ENCODE measurements at regions of chr12 and their contacts with region 1.

Region 1: DNA sequence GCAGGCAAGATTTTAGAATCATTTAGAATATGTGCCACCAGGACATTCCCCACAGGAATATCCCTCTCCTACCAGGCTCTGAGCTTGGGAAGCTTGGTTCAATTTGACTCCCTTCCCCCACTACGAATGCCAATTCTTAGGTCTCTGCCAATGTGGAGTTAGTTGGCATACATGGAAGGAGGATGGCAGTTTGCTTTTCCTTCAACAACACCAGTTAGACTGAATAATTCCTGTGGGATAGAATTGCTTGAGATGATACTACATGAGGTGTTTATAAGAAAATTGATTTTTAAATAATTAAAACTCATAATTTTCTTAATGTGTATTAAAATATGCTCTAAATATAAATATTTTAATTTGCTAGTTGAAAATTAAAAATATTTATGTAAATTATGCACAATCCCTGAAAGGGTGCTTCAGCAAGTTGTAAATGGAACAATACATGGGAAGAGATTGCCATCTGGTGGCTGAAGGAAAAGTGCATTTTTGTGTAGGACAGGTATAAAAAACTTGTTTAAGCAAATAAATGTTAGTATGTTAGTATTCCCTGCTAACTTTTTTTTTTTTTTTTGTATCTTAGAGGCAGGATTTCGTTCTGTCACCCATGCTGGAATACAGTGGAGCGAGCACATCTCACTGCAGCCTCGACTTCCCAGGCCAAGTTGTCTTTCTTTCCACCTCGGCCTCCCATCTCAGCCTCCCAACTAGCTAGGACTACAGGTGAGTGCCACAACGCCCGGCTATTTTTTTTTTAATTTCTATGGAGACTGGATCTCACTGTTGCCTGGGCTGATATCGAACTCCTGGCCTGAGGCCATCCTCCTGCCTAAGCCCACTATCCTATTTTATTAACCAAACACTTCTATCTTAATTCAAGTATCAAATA is 25.8 kb upstream of the STRAP start:
- DNase-seq: no peak
- ATAC-seq: peak; percentile 84
- H3K4me3 ChIP-seq: no peak overlapping the region
- H3K27ac ChIP-seq: peak overlapping the region in 1 of 2 donors; percentile 36
- H3K4me1 ChIP-seq: peaks cover 0 to 2% of the 10 kb centered on the region in 2 donors
- H3K27me3 ChIP-seq: no peaks in the 10 kb centered on the region

Region 2: DNA sequence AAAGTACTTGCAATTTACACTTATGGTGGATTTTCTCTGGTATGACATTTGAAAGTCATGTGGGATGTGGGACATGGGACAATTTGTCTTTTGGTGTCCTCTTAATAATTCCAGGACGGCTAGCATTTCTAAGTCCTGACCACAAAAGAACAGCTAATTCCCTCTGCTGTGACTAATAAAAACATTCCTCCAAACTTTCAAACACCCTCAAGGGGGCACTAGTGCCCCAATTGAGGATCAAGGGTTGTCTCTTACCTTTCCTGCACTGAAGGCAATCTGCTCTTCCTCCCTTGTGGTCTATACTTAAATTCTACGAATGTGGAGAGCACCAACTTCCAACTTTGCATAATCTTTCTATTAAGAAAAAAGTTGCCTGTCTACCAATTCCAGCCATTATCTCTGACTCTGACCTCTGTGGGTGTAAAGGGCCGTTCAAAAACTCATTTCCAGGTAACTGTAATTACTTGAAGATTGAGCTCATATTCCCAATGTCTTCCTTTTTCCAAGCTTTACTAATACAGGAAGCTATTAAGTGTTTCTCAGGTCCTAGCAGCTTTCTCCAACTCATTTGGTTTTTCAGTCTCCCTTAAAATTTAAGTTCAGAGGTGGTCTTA is 323.9 kb before region 1 on chr12:
- intact Hi-C with region 1: loop called (anchors 2 to 5 kb)
- DNase-seq: no peak
- ATAC-seq: no peak
- H3K4me3 ChIP-seq: no peak overlapping the region
- H3K27ac ChIP-seq: no peak overlapping the region
- H3K4me1 ChIP-seq: peaks cover 7 to 11% of the 10 kb centered on the region in 2 donors
- H3K27me3 ChIP-seq: no peaks in the 10 kb centered on the region

Region 3: GRCh38 chr12:15590180-15590826 is 266.0 kb before region 1 on chr12:
- intact Hi-C with region 1: loop called (anchors 1 kb)
- DNase-seq: peak in 1 of 2 donors; percentile 49
- ATAC-seq: peak; percentile 92
- H3K4me3 ChIP-seq: no peak overlapping the region
- H3K27ac ChIP-seq: no peak overlapping the region
- H3K4me1 ChIP-seq: no peaks in the 10 kb centered on the region
- H3K27me3 ChIP-seq: no peaks in the 10 kb centered on the region

Region 4: GRCh38 chr12:15636060-15636890 is 220.1 kb before region 1 on chr12:
- intact Hi-C with region 1: loop called in 1 of 2 experiments (anchors 5 kb)
- DNase-seq: no peak
- ATAC-seq: no peak
- H3K4me3 ChIP-seq: no peak overlapping the region
- H3K27ac ChIP-seq: no peak overlapping the region
- H3K4me1 ChIP-seq: peaks cover 2 to 3% of the 10 kb centered on the region in 2 donors
- H3K27me3 ChIP-seq: no peaks in the 10 kb centered on the region

Region 5: DNA sequence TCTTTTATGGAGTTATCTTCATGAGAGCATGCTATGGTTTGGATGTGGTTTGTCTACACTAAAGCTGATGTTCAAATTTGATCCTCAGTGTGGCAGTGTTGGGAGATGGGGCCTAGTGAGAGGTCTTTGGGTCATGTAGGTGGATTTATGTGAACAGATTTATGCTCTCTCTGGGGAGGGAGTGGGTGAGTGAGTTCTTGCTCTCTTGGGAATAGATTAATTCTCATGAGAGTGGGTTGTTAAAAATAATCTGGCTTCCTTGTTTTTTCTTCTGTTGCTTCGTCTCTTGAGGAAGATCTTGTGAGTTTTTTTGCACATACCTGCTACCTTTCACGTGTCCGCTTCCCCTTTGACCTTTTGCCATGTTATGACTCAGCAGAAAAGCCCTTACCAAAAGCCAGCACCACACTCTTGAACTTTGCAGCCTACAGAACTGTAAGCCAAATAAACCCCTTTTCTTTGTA is 75.3 kb after region 1 on chr12:
- intact Hi-C with region 1: no loop called
- DNase-seq: no peak
- ATAC-seq: no peak
- H3K4me3 ChIP-seq: no peak overlapping the region
- H3K27ac ChIP-seq: no peak overlapping the region
- H3K4me1 ChIP-seq: peaks cover 0 to 2% of the 10 kb centered on the region in 2 donors
- H3K27me3 ChIP-seq: no peaks in the 10 kb centered on the region